ENCODE measurements at regions of chr3 and their contacts with region 1.

Region 1: DNA sequence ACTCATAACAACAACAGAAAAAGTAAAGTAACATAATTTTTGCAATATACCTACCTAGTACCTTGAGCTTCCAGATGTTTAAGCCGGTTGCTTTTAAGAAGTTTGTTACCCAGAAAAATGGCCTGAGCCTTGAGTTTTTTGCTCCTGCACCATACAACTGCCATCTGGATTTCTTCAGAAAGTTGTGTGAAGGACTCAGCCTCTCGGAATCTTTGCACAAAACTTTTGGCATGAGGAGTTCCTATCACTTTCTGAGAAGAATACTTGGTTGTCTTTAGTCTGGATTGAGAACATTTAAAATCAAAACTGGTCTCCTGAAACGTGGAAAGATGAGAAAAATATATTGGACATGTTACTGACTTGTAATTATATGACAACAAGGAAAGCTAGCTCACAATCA is 17.3 kb downstream of the GTPBP8 start:
- DNase-seq: no peak
- H3K4me3 ChIP-seq: no peak overlapping the region
- H3K27ac ChIP-seq: no peak overlapping the region
- H3K4me1 ChIP-seq: no peaks in the 10 kb centered on the region
- H3K27me3 ChIP-seq: no peaks in the 10 kb centered on the region

Region 2: DNA sequence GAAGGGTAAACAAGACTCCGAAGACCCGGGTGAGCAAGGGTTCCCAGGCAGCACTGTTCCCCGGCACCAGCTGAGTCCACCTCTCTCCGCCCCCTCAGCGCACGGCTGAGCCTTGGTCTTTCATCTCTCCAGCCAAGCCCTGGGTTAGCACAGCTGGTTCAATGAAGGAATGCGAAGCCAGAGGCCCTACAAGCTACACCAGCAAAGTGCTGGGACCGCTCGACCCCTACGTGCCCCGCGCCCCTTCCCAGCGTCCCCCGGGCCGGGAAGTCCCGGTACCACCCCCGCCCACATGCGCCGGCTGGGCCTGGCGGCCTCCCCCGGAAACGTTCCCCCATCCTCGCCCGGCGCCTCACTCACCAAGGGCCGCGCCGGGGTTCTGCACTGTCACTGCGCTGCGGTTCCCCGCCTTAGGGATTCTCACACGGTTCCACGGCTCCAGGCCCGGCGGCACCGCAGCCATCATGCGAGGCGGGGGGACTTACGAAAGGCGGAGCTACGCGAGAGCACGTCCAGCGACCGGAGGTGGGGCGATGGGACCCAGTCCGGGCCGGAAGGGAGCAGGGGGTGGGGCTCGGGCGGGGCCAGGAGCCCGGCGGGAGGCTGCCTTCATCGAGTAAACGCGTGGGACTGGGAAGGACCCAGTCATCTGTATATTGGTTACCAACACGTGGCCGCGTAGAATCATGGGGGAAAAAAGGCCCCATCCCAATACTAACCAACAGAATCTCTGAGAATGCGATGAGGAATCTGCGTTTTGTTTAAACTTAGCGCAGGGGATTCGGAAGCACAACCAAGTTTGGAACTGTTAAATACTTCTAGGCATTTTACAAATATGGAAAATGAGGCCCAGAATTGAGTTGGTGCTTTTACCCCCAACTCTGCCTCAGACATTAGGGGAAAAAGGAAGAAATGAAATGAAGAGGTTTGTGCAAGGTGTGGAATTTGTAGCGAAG is 11.3 kb after region 1 on chr3:
- CTCF ChIA-PET with region 1: interaction called, 25 read pairs
- POLR2A ChIA-PET with region 1: no interaction called
- DNase-seq: peak; percentile 92 to 96 (median 95)
- H3K4me3 ChIP-seq: peak overlapping the region; percentile 40 to 94 (median 84)
- H3K27ac ChIP-seq: peak overlapping the region; percentile 87 to 88
- H3K4me1 ChIP-seq: peaks cover 6 to 25% (median 20%) of the 10 kb centered on the region in 4 experiments
- H3K27me3 ChIP-seq: no peaks in the 10 kb centered on the region

Region 3: DNA sequence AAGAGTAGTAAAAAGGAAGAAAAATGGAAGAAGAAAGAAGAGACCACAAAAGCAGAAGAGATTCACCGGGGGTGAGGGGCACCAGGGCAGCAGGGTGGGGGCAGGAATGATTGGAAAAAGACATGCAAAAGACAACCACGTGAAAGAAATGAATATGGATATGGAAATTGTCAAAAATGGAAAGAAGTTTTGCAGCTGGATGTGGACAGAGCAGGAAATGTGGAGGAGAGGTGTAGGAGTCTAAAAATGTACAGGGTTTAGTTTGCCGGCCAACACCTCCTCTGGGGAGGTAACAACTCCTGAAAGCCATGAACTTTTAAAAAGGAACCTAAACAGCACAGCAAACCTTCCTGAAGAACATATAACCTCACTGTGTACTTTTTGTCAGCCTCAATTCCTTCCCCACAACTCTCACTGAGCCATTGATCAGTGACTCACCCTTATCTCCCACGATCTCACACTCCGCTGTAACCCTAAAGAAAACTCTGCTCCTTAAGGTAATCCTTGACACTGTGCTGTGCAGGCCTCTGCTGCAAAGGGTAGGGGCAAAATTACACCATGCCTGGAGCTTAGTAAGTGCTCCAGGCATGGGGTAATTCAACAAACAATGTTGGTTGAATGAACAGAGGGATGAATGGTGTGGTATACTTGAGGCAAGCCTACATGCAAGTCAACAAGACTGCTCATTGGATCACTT is 103.0 kb after region 1 on chr3:
- CTCF ChIA-PET with region 1: no interaction called
- POLR2A ChIA-PET with region 1: no interaction called
- DNase-seq: peak in 2 of 3 donors; percentile 26
- H3K4me3 ChIP-seq: no peak overlapping the region
- H3K27ac ChIP-seq: no peak overlapping the region
- H3K4me1 ChIP-seq: peaks cover 0 to 7% (median 2%) of the 10 kb centered on the region in 4 experiments
- H3K27me3 ChIP-seq: no peaks in the 10 kb centered on the region